Activated CD8-positive, alpha-beta T cell treated with anti-CD3 and anti-CD28 coated beads for 36 hours (primary cell): ENCODE measurements at regions of chr7 and their contacts with region 1.

Region 1: DNA sequence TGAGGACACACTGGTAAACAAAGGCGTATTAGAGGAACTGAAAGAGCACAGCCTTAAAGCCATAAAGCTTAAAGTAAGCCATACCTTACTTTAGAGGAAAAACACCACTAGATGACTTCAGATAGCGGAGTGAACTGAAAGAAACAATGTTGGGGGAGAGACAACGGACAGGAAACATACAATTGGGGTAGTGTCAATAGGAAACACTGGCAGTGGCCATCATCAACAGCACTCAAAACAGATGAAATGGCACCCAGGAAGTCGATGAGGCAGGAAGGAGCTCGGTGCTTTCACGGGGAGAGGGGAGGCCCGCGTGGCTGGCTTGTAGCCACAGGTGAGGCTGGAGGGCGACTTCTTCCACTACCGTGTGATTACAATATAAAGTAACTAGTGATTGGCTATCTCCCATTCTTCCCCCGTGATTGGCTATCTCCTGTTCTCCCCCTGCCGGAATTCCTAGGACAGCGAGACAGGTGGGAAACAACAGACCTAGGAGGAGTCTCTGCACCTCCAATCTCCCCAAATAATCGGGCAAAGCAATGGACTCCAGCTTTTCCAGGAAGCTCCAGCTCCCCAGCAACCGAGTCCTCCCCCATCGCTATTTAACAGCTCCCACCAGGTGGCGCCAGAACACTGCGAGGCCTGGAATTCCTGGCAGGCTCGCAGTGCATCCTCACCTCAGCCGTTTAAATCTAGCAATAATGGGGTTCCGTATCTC is 2.4 kb upstream of the TAS2R38 start:
- DNase-seq: peak; percentile 80
- ATAC-seq: peak; percentile 88
- H3K4me3 Mint-ChIP-seq: peak overlapping the region; percentile 68
- H3K27ac Mint-ChIP-seq: peak overlapping the region; percentile 62
- H3K4me1 Mint-ChIP-seq: peaks cover 12% of the 10 kb centered on the region
- H3K27me3 Mint-ChIP-seq: no peaks in the 10 kb centered on the region
- CTCF ChIP-seq: peak; percentile 96

Region 2: GRCh38 chr7:141960687-141961422 is 15.1 kb before region 1 on chr7:
- CTCF ChIA-PET with region 1: interaction called, 21 read pairs
- POLR2A ChIA-PET with region 1: no interaction called
- intact Hi-C with region 1: no loop called
- DNase-seq: no peak
- ATAC-seq: no peak
- H3K4me3 Mint-ChIP-seq: no peak overlapping the region
- H3K27ac Mint-ChIP-seq: no peak overlapping the region
- H3K4me1 Mint-ChIP-seq: no peaks in the 10 kb centered on the region
- H3K27me3 Mint-ChIP-seq: no peaks in the 10 kb centered on the region
- CTCF ChIP-seq: no peak

Region 3: GRCh38 chr7:141992156-141992555 is 16.2 kb after region 1 on chr7:
- CTCF ChIA-PET with region 1: interaction called, 14 read pairs
- POLR2A ChIA-PET with region 1: no interaction called
- intact Hi-C with region 1: no loop called
- DNase-seq: no peak
- ATAC-seq: no peak
- H3K4me3 Mint-ChIP-seq: no peak overlapping the region
- H3K27ac Mint-ChIP-seq: no peak overlapping the region
- H3K4me1 Mint-ChIP-seq: no peaks in the 10 kb centered on the region
- H3K27me3 Mint-ChIP-seq: peaks cover 2% of the 10 kb centered on the region
- CTCF ChIP-seq: no peak

Region 4: GRCh38 chr7:142188846-142189245 is 212.9 kb after region 1 on chr7:
- CTCF ChIA-PET with region 1: interaction called, 5 read pairs
- POLR2A ChIA-PET with region 1: no interaction called
- intact Hi-C with region 1: loop called (anchors 2 kb)
- DNase-seq: no peak
- ATAC-seq: no peak
- H3K4me3 Mint-ChIP-seq: no peak overlapping the region
- H3K27ac Mint-ChIP-seq: no peak overlapping the region
- H3K4me1 Mint-ChIP-seq: peaks cover 5% of the 10 kb centered on the region
- H3K27me3 Mint-ChIP-seq: peaks cover 14% of the 10 kb centered on the region
- CTCF ChIP-seq: no peak